B cell (primary cell): ENCODE measurements at regions of chr6 and their contacts with region 1.

Region 1: GRCh38 chr6:41027799-41028628 is 11.0 kb downstream of the UNC5CL start:
- DNase-seq: peak; percentile 85
- ATAC-seq: peak; percentile 89
- H3K4me3 ChIP-seq: peak overlapping the region; percentile 4 to 73 (median 66)
- H3K4me3 Mint-ChIP-seq: peak overlapping the region; percentile 88
- H3K27ac ChIP-seq: peak overlapping the region in 1 of 2 donors; percentile 63
- H3K27ac Mint-ChIP-seq: peak overlapping the region; percentile 55
- H3K4me1 ChIP-seq: peaks cover 20 to 23% of the 10 kb centered on the region in 2 donors
- H3K4me1 Mint-ChIP-seq: peaks cover 24% of the 10 kb centered on the region
- H3K27me3 ChIP-seq: no peaks in the 10 kb centered on the region
- H3K27me3 Mint-ChIP-seq: no peaks in the 10 kb centered on the region
- CTCF ChIP-seq: peak; percentile 100

Region 2: GRCh38 chr6:39865011-39865888 is 1162.8 kb before region 1 on chr6:
- CTCF ChIA-PET with region 1: no interaction called
- POLR2A ChIA-PET with region 1: no interaction called
- intact Hi-C with region 1: loop called (anchors 10 kb)
- DNase-seq: peak; percentile 47
- ATAC-seq: no peak
- H3K4me3 ChIP-seq: no peak overlapping the region
- H3K4me3 Mint-ChIP-seq: no peak overlapping the region
- H3K27ac ChIP-seq: no peak overlapping the region
- H3K27ac Mint-ChIP-seq: no peak overlapping the region
- H3K4me1 ChIP-seq: no peaks in the 10 kb centered on the region
- H3K4me1 Mint-ChIP-seq: no peaks in the 10 kb centered on the region
- H3K27me3 ChIP-seq: peaks cover 0 to 1% (median 0%) of the 10 kb centered on the region in 4 experiments
- H3K27me3 Mint-ChIP-seq: peaks cover 19% of the 10 kb centered on the region
- CTCF ChIP-seq: peak; percentile 75

Region 3: DNA sequence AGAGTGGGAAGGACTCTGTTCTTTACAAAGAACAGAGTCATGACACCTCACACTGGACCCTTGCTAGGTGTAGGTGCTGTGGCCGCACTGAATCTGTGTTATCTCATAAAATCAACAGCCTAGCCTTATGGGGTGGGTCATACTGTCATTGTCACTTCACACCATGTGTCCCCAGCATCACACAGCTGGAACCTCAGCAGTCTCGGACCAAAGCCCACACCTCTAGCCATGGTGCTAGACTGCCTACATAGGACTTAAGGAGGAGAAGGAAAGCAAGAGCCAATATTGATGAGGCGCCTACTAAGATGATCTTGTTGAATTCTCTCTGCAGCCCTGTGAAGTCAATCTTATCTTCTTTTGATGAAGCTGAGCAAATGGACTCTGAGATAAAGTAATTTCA is 20.0 kb before region 1 on chr6:
- CTCF ChIA-PET with region 1: interaction called, 35 read pairs
- POLR2A ChIA-PET with region 1: no interaction called
- intact Hi-C with region 1: loop called (anchors 1 kb)
- DNase-seq: no peak
- ATAC-seq: no peak
- H3K4me3 ChIP-seq: no peak overlapping the region
- H3K4me3 Mint-ChIP-seq: no peak overlapping the region
- H3K27ac ChIP-seq: no peak overlapping the region
- H3K27ac Mint-ChIP-seq: no peak overlapping the region
- H3K4me1 ChIP-seq: no peaks in the 10 kb centered on the region
- H3K4me1 Mint-ChIP-seq: no peaks in the 10 kb centered on the region
- H3K27me3 ChIP-seq: peaks cover 0 to 15% (median 8%) of the 10 kb centered on the region in 4 experiments
- H3K27me3 Mint-ChIP-seq: peaks cover 22% of the 10 kb centered on the region
- CTCF ChIP-seq: no peak

Region 4: DNA sequence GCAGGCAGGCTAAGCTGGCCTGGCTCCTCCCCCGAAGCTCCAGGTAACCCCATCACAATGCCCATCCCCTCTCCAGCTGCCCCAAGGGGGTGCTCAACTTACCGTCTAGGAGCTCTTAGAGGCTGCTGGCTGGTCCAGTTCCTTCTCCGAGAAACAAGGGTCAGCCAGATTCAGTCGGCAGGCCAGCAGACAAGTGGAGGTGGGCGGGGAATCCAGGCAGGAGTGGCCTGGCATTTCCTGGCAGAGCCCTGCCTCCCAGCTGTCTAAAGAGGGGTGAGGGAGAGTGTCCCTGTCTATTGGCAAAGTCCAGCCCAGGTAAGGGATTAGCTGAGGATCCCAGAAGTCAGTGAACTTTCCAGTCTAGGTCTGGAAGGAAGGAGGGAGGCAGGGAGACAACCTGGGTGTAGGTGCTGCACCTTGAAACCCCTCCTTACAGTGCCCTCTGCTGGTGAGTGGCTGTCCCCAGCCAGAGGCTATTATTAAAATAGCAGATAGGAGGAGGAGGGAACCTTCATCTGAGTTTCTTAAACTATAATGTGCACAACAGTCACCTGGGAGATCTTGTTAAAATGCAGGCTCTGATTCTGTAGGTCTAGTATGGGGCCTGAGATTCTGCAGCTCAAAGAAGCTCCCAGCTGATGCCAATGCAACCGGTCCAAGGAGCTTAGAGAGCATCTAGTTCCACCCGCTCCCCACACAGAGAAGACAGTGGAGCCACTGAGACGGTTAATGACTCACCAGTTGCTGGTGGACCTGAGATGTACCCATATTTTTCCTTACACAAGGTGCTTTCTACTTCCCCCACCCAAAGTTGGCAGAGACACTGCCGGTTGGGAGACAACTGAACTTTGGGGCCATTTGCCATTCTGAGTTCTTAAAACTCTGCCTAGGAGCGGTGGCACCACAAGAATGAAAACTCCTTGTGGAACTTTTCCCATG is 11.3 kb after region 1 on chr6 and contains the start of gene UNC5CL:
- CTCF ChIA-PET with region 1: interaction called, 23 read pairs
- POLR2A ChIA-PET with region 1: no interaction called
- intact Hi-C with region 1: no loop called
- DNase-seq: peak; percentile 58
- ATAC-seq: peak; percentile 60
- H3K4me3 ChIP-seq: no peak within 1 kb of the TSS
- H3K4me3 Mint-ChIP-seq: no peak within 1 kb of the TSS
- H3K27ac ChIP-seq: no peak within 1 kb of the TSS
- H3K27ac Mint-ChIP-seq: no peak within 1 kb of the TSS
- H3K4me1 ChIP-seq: no peaks in the 10 kb centered on the region
- H3K4me1 Mint-ChIP-seq: no peaks in the 10 kb centered on the region
- H3K27me3 ChIP-seq: no peaks in the 10 kb centered on the region
- H3K27me3 Mint-ChIP-seq: no peaks in the 10 kb centered on the region
- CTCF ChIP-seq: peak; percentile 73
- total RNA-seq, gene UNC5CL: 4.6 and 4.7 TPM in 2 replicates

Region 5: DNA sequence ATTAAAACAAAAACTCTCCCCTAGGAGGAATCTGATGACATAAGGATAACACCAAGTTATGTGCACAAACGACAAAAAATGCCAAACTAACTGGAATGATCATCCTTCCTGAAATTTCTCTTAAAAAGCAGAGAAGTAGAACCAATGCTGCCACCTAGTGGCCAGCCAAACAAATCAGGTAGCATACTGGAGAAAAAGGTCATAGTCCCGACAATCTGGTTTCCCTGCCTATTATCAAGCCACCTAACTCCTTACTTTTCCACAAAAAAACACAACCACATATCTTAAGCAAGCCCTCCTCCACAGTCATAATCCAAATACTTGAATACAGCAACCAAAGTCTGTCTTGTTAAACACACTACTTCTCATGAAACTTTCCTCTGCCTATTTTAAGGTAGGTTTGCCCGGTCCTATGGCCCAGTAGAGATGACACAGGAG is 38.9 kb after region 1 on chr6:
- CTCF ChIA-PET with region 1: interaction called, 26 read pairs
- POLR2A ChIA-PET with region 1: no interaction called
- intact Hi-C with region 1: loop called (anchors 1 kb)
- DNase-seq: peak; percentile 82
- ATAC-seq: no peak
- H3K4me3 ChIP-seq: no peak overlapping the region
- H3K4me3 Mint-ChIP-seq: no peak overlapping the region
- H3K27ac ChIP-seq: no peak overlapping the region
- H3K27ac Mint-ChIP-seq: peak overlapping the region; percentile 15
- H3K4me1 ChIP-seq: peaks cover 8% of the 10 kb centered on the region in 2 donors
- H3K4me1 Mint-ChIP-seq: peaks cover 19% of the 10 kb centered on the region
- H3K27me3 ChIP-seq: no peaks in the 10 kb centered on the region
- H3K27me3 Mint-ChIP-seq: no peaks in the 10 kb centered on the region
- CTCF ChIP-seq: peak; percentile 94